Activated CD8-positive, alpha-beta T cell treated with anti-CD3 and anti-CD28 coated beads for 36 hours (primary cell): ENCODE measurements at regions of chr13 and their contacts with region 1.

Region 1: GRCh38 chr13:39942552-39943273 is 287.3 kb downstream of the COG6 start:
- DNase-seq: peak; percentile 80
- ATAC-seq: peak; percentile 100
- H3K4me3 Mint-ChIP-seq: no peak overlapping the region
- H3K27ac Mint-ChIP-seq: no peak overlapping the region
- H3K4me1 Mint-ChIP-seq: peaks cover 10% of the 10 kb centered on the region
- H3K27me3 Mint-ChIP-seq: no peaks in the 10 kb centered on the region
- CTCF ChIP-seq: peak; percentile 100

Region 2: DNA sequence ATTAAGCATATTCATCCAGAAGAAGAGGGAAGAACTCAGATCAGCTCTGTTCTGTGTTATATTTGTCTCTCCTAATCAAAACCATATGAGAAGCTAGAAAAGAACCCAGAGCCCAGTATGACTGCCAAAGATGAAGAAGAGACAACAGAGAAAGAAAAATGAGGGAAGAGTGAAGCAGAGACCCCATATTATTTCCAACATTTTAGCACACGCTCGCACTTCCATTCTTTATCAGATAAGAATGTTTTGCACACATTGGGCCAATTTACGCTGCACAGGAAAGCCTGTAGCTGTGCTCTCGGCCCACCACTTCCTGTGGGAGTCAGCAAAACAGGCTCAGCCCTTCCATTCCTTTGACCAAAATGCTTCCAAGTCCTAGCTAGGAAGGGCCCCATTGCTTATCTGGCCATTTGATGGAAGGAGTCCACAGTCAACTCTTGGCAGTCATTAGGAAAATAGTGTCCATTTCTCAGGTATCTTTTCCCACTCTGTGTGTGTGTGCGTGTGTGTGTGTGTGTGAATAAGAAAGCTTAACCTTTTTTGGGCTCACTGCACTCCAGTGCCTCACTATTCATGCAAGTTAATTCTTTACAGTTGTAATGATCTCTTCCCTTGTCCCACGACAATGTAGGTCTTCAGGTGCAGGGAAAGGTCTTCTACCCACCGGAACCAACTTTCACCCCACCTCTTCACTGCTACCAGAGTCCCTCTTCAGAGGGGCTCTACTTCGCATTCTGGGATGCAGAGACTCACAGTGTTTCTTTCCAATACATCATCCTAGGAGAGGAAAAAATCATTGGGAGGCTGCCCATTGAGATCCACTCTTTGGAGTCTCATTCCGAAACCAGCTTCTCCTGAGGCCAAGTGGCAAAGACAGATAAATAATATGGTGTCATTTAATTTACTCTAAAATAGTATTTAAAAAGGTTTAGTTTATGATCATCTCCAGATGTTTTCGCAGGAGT is 49.7 kb before region 1 on chr13:
- CTCF ChIA-PET with region 1: interaction called, 14 read pairs
- POLR2A ChIA-PET with region 1: no interaction called
- intact Hi-C with region 1: no loop called
- DNase-seq: peak; percentile 37
- ATAC-seq: peak; percentile 60
- H3K4me3 Mint-ChIP-seq: peak overlapping the region; percentile 14
- H3K27ac Mint-ChIP-seq: peak overlapping the region; percentile 58
- H3K4me1 Mint-ChIP-seq: peaks cover 22% of the 10 kb centered on the region
- H3K27me3 Mint-ChIP-seq: no peaks in the 10 kb centered on the region
- CTCF ChIP-seq: no peak

Region 3: DNA sequence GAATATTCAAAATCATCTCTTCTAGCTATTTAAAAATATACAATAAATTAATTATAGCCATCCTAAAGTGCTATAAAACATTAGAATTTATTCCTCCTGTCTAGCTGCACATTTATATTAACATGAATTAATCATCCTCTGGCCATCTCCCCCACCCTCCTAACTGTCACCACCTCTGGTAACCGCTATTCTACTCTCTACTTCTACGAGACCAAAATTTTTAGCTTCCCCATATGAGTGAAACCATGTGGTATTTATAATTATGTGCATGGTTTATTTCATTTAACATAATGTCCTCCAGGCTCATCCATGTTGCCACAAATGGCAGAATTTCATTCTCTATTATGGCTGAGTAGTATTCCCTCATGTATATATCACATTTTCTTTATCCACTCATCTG is 22.1 kb before region 1 on chr13:
- CTCF ChIA-PET with region 1: interaction called, 17 read pairs
- POLR2A ChIA-PET with region 1: no interaction called
- intact Hi-C with region 1: no loop called
- DNase-seq: no peak
- ATAC-seq: no peak
- H3K4me3 Mint-ChIP-seq: no peak overlapping the region
- H3K27ac Mint-ChIP-seq: no peak overlapping the region
- H3K4me1 Mint-ChIP-seq: peaks cover 2% of the 10 kb centered on the region
- H3K27me3 Mint-ChIP-seq: peaks cover 6% of the 10 kb centered on the region
- CTCF ChIP-seq: no peak

Region 4: GRCh38 chr13:39967199-39967959 is 24.7 kb after region 1 on chr13:
- CTCF ChIA-PET with region 1: interaction called, 31 read pairs
- POLR2A ChIA-PET with region 1: no interaction called
- intact Hi-C with region 1: no loop called
- DNase-seq: no peak
- ATAC-seq: no peak
- H3K4me3 Mint-ChIP-seq: no peak overlapping the region
- H3K27ac Mint-ChIP-seq: no peak overlapping the region
- H3K4me1 Mint-ChIP-seq: peaks cover 2% of the 10 kb centered on the region
- H3K27me3 Mint-ChIP-seq: peaks cover 3% of the 10 kb centered on the region
- CTCF ChIP-seq: no peak

Region 5: DNA sequence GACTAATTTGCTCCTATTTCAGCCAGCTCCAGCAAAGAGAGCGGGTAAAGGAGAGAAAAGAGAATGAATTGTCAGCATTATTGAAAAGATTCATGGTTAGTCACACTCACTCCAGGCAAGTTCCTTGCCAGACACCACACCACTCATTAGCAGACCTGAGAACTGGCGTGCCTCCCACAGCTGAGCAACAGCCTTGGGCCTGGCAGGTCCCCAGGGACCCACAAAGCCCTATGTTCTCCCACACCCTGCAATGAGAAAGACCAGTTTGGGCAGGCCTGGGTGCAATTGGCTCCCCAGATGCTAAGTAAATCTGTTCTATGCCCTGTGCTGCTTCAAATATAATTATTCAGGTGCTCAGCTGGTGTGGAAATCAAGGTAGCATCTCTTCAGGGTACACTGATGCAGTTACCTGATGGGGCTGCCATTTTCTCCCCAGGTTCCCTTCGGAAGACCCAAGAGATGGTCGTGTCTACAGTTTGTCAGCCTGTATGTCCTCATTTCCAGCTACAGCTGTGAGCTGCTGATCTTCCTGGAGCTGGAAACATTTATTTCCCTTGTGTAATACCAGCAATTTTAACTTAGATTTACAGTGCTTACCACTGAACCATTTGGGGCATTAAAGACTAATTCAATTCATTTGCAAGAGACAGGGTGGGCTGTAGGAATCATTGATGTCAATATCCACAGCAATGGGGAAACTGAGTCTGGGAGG is 117.7 kb after region 1 on chr13:
- CTCF ChIA-PET with region 1: interaction called, 21 read pairs
- POLR2A ChIA-PET with region 1: no interaction called
- intact Hi-C with region 1: no loop called
- DNase-seq: peak; percentile 46
- ATAC-seq: peak; percentile 75
- H3K4me3 Mint-ChIP-seq: no peak overlapping the region
- H3K27ac Mint-ChIP-seq: no peak overlapping the region
- H3K4me1 Mint-ChIP-seq: peaks cover 32% of the 10 kb centered on the region
- H3K27me3 Mint-ChIP-seq: peaks cover 2% of the 10 kb centered on the region
- CTCF ChIP-seq: no peak

Region 6: GRCh38 chr13:40682449-40683240 is 739.9 kb after region 1 on chr13:
- CTCF ChIA-PET with region 1: interaction called, 19 read pairs
- POLR2A ChIA-PET with region 1: no interaction called
- intact Hi-C with region 1: loop called (anchors 5 kb)
- DNase-seq: no peak
- ATAC-seq: peak; percentile 74
- H3K4me3 Mint-ChIP-seq: no peak overlapping the region
- H3K27ac Mint-ChIP-seq: no peak overlapping the region
- H3K4me1 Mint-ChIP-seq: peaks cover 7% of the 10 kb centered on the region
- H3K27me3 Mint-ChIP-seq: no peaks in the 10 kb centered on the region
- CTCF ChIP-seq: peak; percentile 78